ENCODE measurements at regions of chr5 and their contacts with region 1.

Region 1: GRCh38 chr5:73962801-73963425 is 336.9 kb downstream of the ARHGEF28 start:
- DNase-seq: peak; percentile 62 to 89
- H3K4me3 ChIP-seq: no peak overlapping the region
- H3K27ac ChIP-seq: peak overlapping the region; percentile 62
- H3K4me1 ChIP-seq: peaks cover 6% of the 10 kb centered on the region
- H3K27me3 ChIP-seq: no peaks in the 10 kb centered on the region
- CTCF ChIP-seq: no peak

Region 2: DNA sequence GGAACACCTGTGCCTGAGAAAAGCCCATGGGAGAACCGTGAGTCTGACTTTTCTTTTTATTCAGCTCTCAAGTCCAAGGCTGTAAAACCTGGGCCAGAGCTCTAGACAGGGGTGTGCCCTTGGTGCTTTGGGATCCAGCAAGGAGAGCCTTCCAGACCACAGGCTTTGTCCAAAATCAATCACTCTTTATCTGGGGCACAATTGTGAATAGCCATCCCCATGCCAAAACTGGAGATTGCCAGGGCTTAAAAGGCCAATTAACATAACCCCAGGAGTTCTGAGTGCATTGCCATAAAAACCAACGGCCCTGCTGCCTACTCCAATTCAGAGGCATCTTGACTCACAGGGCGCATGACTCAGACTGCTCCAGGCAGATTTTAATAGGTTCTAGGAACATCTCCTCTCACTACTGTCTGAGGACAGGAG is 54.9 kb after region 1 on chr5:
- CTCF ChIA-PET with region 1: interaction called, 15 read pairs
- POLR2A ChIA-PET with region 1: no interaction called
- intact Hi-C with region 1: no loop called
- DNase-seq: peak; percentile 51 to 90
- H3K4me3 ChIP-seq: no peak overlapping the region
- H3K27ac ChIP-seq: peak overlapping the region; percentile 75
- H3K4me1 ChIP-seq: peaks cover 24% of the 10 kb centered on the region
- H3K27me3 ChIP-seq: no peaks in the 10 kb centered on the region
- CTCF ChIP-seq: no peak

Region 3: DNA sequence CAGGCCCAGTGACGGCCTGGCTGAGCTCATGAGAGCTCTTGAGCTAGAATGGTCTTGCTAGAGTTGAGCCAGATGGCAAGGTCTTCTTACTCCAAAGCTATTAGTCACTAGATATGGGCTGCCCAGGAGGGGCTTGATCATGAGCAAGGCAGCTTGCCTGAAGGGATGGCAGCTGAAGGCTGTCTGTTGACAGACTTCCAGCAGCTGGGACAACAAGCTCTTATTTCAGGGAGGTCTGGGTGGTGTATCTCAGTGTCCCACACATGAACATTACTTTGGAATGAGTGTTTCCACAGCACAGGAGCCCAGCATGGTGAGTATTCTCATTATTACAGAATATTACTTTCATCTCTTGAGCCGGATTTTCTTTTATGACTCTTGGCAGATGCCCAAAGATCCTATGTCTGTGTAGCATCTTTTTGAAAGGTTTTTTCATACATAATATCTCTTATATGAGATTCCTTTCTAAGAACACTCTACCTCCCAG is 77.2 kb after region 1 on chr5:
- CTCF ChIA-PET with region 1: no interaction called
- POLR2A ChIA-PET with region 1: no interaction called
- intact Hi-C with region 1: no loop called
- DNase-seq: no peak
- H3K4me3 ChIP-seq: no peak overlapping the region
- H3K27ac ChIP-seq: no peak overlapping the region
- H3K4me1 ChIP-seq: peaks cover 17% of the 10 kb centered on the region
- H3K27me3 ChIP-seq: no peaks in the 10 kb centered on the region
- CTCF ChIP-seq: no peak